ENCODE measurements at regions of chr11 and their contacts with region 1.

Region 1: GRCh38 chr11:77559686-77560425 is 29.9 kb upstream of the AQP11 start:
- DNase-seq: peak in 1 of 2 donors; percentile 30
- H3K4me3 ChIP-seq: no peak overlapping the region
- CTCF ChIP-seq: no peak
- POLR2A ChIP-seq: no peak

Region 2: GRCh38 chr11:78542007-78542406 is 982.2 kb after region 1 on chr11:
- intact Hi-C with region 1: loop called (anchors 5 kb)
- DNase-seq: no peak
- H3K4me3 ChIP-seq: no peak overlapping the region
- CTCF ChIP-seq: no peak
- POLR2A ChIP-seq: no peak